Transverse colon (tissue), 4 donors: ENCODE measurements at regions of chr5 and their contacts with region 1.

Region 1: DNA sequence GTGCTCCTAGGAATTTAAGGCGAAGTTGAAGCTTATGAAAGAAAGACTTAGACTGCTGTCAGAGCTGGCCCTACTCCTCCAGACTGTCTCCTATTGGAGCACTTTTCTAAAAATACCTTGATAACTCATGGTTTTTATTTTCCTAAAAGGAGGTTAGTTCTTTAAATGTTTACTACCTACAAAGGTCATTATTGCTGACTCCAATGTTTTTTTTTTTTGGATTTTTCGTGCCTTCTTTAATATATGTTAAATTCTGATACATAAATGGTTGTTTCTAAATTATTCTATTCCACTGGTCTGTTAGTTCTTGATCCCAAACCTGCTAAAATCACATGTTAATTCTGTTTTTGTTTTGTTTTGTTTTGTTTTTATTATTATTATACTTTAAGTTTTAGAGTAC is 227.6 kb upstream of the FTMT start:
- DNase-seq: no peak
- H3K4me3 ChIP-seq: no peak overlapping the region
- H3K27ac ChIP-seq: no peak overlapping the region
- H3K4me1 ChIP-seq: no peaks in the 10 kb centered on the region
- H3K27me3 ChIP-seq: no peaks in the 10 kb centered on the region
- CTCF ChIP-seq: no peak
- EP300 ChIP-seq: no peak
- POLR2A ChIP-seq: no peak

Region 2: DNA sequence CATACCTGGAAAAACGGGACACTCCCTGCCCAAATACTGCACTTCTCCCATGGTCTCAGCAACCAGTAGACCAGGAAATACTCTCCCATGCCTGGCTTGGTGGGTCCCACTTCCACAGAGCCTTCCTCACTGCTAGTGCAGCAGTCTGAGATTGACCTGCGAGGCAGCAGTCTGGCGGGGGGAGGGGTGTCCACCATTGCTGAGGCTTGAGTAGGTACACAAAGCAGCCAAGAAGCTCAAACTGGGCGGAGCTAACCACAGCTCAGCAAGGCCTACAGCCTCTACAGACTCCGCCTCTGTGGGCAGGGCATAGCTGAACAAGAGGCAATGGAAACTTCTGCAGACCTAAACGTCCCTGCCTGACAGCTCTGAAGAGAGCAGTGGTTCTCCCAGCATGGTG is 36.1 kb after region 1 on chr5:
- in situ Hi-C with region 1: no loop called
- intact Hi-C with region 1: no loop called
- DNase-seq: no peak
- H3K4me3 ChIP-seq: no peak overlapping the region
- H3K27ac ChIP-seq: no peak overlapping the region
- H3K4me1 ChIP-seq: no peaks in the 10 kb centered on the region
- H3K27me3 ChIP-seq: no peaks in the 10 kb centered on the region
- CTCF ChIP-seq: no peak
- EP300 ChIP-seq: no peak
- POLR2A ChIP-seq: no peak

Region 3: DNA sequence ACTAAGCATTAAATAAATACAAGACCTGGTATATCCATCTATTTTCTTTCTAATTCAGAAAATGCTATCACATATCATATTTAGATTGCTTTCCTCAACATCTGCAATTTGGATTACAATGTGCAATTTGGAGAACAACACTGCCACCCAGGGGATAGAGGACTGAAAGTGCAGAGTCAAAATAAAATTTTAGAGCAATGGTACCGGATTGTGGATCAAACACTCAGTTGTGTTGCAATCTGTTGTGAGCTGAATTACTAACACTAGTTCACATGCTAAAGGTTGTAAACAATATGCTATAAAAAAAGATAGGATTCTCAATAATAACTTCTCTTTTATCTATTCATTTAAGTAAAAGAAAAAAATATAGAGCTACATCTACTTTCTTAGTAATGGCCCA is 325.8 kb after region 1 on chr5:
- in situ Hi-C with region 1: loop called in 1 of 4 experiments (anchors 25 kb)
- intact Hi-C with region 1: no loop called
- DNase-seq: peak; percentile 21
- H3K4me3 ChIP-seq: no peak overlapping the region
- H3K27ac ChIP-seq: no peak overlapping the region
- H3K4me1 ChIP-seq: no peaks in the 10 kb centered on the region
- H3K27me3 ChIP-seq: no peaks in the 10 kb centered on the region
- CTCF ChIP-seq: peak; percentile 48 to 57 (median 55)
- EP300 ChIP-seq: no peak
- POLR2A ChIP-seq: no peak